Activated CD4-positive, alpha-beta memory T cell treated with anti-CD3 and anti-CD28 coated beads for 36 hours (primary cell): ENCODE measurements at regions of chr7 and their contacts with region 1.

Region 1: GRCh38 chr7:66681491-66682349 is 53.0 kb downstream of the KCTD7 start:
- DNase-seq: peak; percentile 96
- H3K4me3 Mint-ChIP-seq: peak overlapping the region; percentile 90
- H3K27ac Mint-ChIP-seq: peak overlapping the region; percentile 95
- H3K4me1 Mint-ChIP-seq: peaks cover 37% of the 10 kb centered on the region
- H3K27me3 Mint-ChIP-seq: no peaks in the 10 kb centered on the region

Region 2: GRCh38 chr7:66591799-66592596 is 89.7 kb before region 1 on chr7:
- CTCF ChIA-PET with region 1: no interaction called
- POLR2A ChIA-PET with region 1: no interaction called
- intact Hi-C with region 1: loop called (anchors 2 kb)
- DNase-seq: peak; percentile 95
- H3K4me3 Mint-ChIP-seq: peak overlapping the region; percentile 96
- H3K27ac Mint-ChIP-seq: peak overlapping the region; percentile 92
- H3K4me1 Mint-ChIP-seq: peaks cover 44% of the 10 kb centered on the region
- H3K27me3 Mint-ChIP-seq: no peaks in the 10 kb centered on the region

Region 3: GRCh38 chr7:66609176-66609575 is 72.5 kb before region 1 on chr7:
- CTCF ChIA-PET with region 1: no interaction called
- POLR2A ChIA-PET with region 1: no interaction called
- intact Hi-C with region 1: no loop called
- DNase-seq: no peak
- H3K4me3 Mint-ChIP-seq: no peak overlapping the region
- H3K27ac Mint-ChIP-seq: no peak overlapping the region
- H3K4me1 Mint-ChIP-seq: no peaks in the 10 kb centered on the region
- H3K27me3 Mint-ChIP-seq: no peaks in the 10 kb centered on the region

Region 4: DNA sequence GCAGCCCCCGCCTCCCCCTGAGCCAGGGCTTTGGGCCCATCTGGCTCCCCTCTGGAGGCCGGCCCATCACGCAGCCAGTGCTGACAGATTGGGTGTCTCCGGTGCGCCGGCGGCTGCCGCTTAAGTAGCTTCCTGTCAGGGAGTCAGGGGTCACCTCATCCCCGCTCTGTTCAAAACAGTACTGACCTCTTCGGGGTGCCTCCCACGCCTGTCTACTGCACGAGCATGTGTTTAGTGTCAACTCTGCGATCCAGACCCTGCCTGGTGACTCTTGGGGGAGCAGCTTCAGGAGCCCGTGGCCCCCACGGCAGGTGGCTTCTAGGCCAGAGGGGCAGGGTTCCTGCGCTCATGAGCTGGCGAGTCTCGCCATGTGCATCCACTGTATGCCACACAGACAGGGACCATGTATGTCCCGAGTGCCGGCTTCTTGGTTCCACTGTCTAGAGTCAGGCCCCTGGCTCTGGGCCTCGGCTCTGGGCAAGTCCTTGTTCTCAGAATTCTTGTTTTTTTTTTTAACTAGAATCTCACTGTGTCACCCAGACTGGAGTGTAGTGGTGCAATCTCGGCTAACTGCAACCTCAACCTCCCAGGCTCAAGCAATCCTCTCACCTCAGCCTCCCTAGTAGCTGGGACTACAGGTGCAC is 16.9 kb before region 1 on chr7:
- CTCF ChIA-PET with region 1: no interaction called
- POLR2A ChIA-PET with region 1: no interaction called
- intact Hi-C with region 1: no loop called
- DNase-seq: no peak
- H3K4me3 Mint-ChIP-seq: no peak overlapping the region
- H3K27ac Mint-ChIP-seq: no peak overlapping the region
- H3K4me1 Mint-ChIP-seq: no peaks in the 10 kb centered on the region
- H3K27me3 Mint-ChIP-seq: no peaks in the 10 kb centered on the region

Region 5: DNA sequence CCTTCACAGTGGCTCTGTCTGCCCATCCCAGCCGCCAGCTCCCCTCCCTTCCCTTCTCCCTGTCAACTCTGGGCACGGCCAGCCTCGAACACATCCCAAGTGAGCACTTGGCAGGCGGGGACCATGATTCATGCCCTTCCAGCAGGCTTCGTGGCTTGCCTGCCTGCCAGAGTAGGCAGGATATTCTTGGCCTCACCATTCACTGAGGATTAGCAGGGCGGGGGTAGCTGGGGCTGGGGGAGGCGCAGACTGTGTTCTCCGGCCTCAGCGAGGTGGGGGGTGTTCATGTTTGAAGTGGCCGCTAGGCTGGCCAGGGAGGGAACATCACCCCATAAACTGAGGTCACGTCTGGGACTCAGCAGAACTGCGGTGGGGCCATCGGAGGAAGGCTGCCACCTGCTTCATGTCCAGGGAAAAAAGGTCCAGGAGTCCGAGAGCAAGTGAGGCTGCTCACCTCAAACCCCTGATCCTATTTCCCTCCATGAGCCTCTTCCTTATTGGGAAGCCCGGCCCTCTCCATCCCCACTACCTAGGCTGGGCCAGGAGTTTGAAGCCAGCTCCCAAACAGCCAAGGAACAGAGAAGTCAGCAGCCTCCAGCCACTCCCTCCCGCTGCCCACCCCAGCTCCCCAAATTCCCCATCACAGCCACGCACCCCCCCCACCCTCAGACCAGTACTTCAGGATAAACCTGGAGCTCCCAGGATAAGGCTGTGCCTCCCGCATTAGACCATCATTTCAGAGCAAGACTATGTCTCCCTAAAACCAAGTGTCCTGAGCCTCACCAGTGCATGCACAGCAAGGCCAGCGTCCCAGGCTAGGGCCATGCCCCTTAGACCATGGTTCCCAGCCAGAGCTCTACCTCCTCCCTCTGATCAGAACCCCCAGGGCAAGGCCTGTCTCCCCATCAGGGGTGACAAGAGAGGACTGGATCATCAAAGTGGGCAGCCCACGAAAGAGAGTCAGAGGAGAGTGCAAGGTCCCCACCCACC is 16.0 kb after region 1 on chr7:
- CTCF ChIA-PET with region 1: no interaction called
- POLR2A ChIA-PET with region 1: no interaction called
- intact Hi-C with region 1: no loop called
- DNase-seq: no peak
- H3K4me3 Mint-ChIP-seq: no peak overlapping the region
- H3K27ac Mint-ChIP-seq: no peak overlapping the region
- H3K4me1 Mint-ChIP-seq: no peaks in the 10 kb centered on the region
- H3K27me3 Mint-ChIP-seq: no peaks in the 10 kb centered on the region

Region 6: GRCh38 chr7:66740302-66740979 is 58.7 kb after region 1 on chr7 and contains the start of gene RABGEF1:
- CTCF ChIA-PET with region 1: no interaction called
- POLR2A ChIA-PET with region 1: interaction called, 3 read pairs
- intact Hi-C with region 1: loop called (anchors 1 kb)
- DNase-seq: peak; percentile 98
- H3K4me3 Mint-ChIP-seq: peak within 1 kb of the TSS; percentile 97
- H3K27ac Mint-ChIP-seq: peak within 1 kb of the TSS; percentile 93
- H3K4me1 Mint-ChIP-seq: peaks cover 32% of the 10 kb centered on the region
- H3K27me3 Mint-ChIP-seq: no peaks in the 10 kb centered on the region
- total RNA-seq, gene RABGEF1: 18.8 to 20.7 TPM

Region 7: DNA sequence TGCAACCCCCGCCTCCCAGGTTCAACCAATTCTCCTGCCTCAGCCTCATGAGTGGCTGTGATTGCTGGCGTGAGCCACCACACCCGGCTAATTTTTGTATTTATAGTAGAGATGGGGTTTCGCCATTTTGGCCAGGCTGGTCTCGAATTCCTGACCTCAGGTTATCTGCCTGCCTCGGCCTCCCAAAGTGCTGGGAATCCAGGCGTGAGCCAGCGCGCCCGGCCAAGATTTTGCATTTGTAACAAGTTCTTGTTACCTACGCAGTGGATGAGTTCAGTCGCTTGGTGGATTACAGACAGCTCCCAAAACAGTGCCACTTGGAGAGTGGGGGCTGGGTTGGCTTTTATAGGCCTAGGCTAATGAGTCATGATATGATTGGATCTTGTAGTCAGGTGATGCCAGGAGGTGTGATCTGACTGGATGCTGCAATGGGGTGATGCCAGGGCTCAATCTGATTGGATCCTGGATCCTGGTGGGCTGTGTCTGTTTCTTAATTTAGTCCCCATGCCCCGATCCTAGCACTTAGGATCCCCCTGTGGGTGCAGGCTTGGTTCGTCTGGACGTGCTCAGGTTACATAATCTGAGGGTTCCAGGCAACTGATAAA is 293.4 kb after region 1 on chr7:
- CTCF ChIA-PET with region 1: no interaction called
- POLR2A ChIA-PET with region 1: no interaction called
- intact Hi-C with region 1: no loop called
- DNase-seq: no peak
- H3K4me3 Mint-ChIP-seq: no peak overlapping the region
- H3K27ac Mint-ChIP-seq: no peak overlapping the region
- H3K4me1 Mint-ChIP-seq: no peaks in the 10 kb centered on the region
- H3K27me3 Mint-ChIP-seq: no peaks in the 10 kb centered on the region